Sciatic nerve (tissue), 2 donors: ENCODE measurements at regions of chr15 and their contacts with region 1.

Region 1: DNA sequence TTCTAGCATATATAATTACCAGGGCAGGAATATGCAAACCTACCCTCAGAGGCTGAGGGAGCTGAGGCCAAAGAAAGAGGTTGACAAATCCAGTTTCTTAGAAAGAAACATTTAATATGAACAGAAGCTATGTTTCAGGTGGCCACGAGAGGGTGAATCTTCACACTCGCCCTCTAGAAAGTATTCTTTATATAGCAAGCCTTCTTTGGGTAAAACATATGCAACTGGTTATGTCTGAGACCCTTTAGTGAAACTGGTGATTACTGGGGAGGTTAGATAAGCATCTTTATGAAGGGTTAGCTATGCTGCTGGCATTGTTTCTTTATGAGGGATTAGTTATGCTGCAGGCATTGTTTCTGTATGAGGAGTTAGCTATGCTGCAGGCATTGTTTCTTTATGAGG is 50.7 kb upstream of the GOLGA6L2 start:
- DNase-seq: no peak
- ATAC-seq: no peak

Region 2: DNA sequence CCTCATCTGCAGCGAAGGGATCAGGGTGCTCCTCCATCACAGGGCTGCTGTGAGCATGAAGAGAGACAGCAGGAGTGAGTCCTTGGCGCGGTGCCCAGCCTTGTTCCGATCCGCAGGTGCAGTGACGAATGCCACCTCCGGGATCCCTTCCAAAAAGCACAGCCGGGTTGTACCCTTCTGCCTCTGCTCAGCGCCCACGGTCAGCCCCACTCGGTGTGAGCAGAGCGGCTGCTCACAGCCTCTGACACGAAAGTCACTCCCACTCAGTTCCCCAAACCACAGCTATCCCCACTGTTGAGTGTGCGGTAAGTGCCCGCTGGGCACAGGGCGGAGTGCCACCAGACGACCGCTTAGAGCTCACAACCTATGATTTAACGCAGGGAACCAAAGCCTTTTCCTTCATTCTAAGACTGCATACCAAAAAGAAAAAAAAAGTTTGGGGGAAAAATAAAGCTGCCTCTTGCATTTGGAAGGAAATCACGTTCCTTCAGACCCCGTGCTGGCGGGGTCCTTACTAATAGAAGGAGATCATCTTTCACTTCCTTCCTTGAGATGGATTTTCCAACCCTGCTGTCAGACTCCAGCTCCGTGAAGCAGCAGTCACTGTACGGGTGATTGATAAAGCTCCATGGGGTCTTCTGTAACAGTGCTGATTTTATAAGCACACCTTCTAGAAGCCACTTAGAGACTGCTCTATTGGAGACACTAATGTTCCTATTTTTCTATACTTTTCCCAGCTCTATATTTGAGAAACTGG is 423.6 kb before region 1 on chr15:
- intact Hi-C with region 1: loop called (anchors 5 kb)
- DNase-seq: no peak
- ATAC-seq: peak; percentile 45

Region 3: GRCh38 chr15:23436421-23436820 is 61.3 kb before region 1 on chr15:
- intact Hi-C with region 1: no loop called
- DNase-seq: no peak
- ATAC-seq: no peak

Region 4: DNA sequence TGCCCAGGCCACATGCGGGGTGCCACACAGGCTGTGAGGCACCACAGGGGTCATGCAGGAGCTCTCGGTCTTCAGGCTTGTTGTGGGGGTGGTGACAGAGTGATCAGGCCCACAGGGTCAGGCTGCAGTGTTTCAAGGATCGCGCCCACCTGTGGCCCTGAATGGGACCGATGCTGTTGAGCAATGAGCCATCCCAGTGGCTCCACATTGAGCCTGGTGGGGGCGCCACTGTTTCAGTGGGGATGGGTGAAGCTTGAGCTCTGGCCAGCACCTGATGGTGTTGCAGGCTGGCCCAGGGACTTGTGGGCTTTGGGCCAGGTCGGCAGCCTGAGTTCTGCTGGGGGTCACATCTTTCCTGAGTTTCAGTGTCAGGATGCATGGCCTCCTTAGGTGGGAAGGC is 1711.0 kb after region 1 on chr15:
- intact Hi-C with region 1: no loop called
- DNase-seq: no peak
- ATAC-seq: no peak